Activated CD8-positive, alpha-beta T cell treated with anti-CD3 and anti-CD28 coated beads for 36 hours (primary cell): ENCODE measurements at regions of chr6 and their contacts with region 1.

Region 1: DNA sequence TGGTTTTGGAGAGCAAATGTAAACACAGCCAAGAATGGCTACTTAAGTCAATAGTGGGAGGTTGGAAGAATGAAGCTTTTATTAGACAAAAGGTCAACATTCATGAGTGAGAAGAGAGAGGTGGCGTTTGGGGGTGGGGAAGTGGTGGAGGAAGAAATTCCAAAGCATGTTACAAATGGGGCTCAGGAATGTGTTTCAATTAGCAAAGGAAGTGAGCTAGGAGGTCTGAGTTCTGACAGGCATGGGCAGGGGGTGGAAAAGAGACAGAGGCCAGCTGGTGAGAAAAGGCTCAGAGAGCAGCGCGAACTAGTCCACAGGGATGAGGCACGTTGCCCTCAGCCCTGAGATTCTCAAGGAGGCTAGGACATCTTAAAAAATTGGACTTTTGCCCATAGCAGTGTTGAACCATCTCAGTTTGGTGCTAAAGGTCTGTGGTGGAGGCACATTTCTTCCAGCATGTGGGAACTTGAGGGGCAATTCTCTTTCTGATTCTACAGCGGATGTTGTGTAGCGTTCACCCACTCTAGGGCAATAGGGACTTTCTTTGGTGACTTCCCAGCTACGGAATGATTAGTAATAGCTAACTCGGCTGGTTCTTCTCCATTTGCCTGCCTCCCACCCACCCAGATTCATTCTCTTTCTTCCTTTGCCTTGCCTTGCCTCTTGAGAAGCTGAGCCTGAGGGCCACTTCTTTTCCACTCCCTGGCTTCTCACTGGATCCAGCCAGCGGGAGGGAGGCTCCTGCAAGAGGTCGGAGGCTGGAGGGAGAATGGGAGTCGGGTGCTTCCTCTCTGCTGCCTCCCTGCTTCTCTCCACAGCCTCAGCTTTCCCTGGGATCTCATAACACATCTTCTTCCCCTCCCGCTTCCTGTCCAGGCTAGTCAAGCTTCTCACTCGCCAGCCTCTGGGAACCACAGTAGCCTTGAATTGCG is 45.1 kb upstream of the NEDD9 start:
- DNase-seq: peak; percentile 48
- ATAC-seq: peak; percentile 65
- H3K4me3 Mint-ChIP-seq: peak overlapping the region; percentile 39
- H3K27ac Mint-ChIP-seq: peak overlapping the region; percentile 88
- H3K4me1 Mint-ChIP-seq: peaks cover 45% of the 10 kb centered on the region
- H3K27me3 Mint-ChIP-seq: no peaks in the 10 kb centered on the region
- CTCF ChIP-seq: no peak

Region 2: DNA sequence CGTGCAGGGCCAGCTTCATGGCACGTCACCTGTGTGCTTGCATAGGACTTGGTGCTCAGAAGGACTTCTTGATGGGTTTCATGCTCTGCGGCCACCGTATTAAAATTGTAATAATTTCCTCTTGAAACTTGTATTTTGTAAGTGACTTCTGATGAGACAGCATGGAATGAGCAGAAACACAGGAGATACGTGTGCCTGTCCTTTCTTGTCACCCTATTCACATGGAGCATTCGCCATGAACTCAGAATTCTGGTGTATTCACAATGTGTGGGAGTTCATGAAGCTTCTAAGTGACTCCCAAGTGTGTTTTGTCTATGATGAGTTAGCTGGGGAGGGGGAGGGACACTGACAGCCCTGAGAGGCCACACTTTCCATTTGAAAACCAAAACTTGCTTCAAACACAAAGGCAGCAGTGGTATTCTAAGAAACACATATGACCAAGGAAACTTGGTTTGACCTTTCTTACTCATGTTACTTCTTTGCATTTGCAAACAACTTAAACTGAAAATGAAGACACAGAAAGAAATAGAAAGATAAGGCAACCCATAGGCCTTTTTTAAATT is 47.0 kb after region 1 on chr6:
- CTCF ChIA-PET with region 1: no interaction called
- POLR2A ChIA-PET with region 1: interaction called, 3 read pairs
- intact Hi-C with region 1: loop called (anchors 2 kb)
- DNase-seq: peak; percentile 87
- ATAC-seq: peak; percentile 92
- H3K4me3 Mint-ChIP-seq: peak overlapping the region; percentile 44
- H3K27ac Mint-ChIP-seq: peak overlapping the region; percentile 85
- H3K4me1 Mint-ChIP-seq: peaks cover 68% of the 10 kb centered on the region
- H3K27me3 Mint-ChIP-seq: no peaks in the 10 kb centered on the region
- CTCF ChIP-seq: no peak

Region 3: DNA sequence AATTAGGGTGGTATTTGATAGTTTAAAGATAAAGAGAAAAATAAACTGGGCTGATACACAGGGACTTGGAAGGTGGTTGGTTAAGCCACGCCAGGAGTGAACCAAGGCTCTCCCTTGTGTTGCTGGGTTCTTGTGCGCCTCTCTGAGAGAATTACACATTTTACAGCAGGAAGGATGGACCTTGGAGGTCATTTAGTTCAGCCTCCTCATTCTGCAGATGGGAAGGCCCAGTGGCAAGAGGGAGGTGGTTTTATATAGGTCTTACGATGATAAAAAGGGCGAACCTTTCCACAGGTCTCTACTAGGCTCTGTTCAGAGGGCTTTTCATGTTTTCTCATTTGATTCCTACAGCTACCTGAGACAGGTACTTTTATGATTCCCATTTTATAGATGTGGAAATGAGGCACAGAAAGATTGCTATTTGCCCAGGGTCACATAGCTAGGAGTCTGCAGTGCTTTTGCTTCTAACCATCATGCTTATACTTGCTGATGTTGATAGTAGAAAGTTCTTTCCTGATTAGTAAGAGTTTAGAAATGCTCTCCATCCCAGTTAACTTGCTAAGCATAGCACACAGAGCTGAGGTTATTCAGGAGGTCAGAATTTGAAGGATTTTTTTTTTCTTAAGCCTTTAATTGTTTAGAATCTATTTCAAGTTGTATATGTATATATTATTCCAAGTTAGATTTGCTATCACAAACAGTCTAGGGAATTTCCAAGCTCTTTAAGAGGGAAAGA is 747.3 kb after region 1 on chr6:
- CTCF ChIA-PET with region 1: no interaction called
- POLR2A ChIA-PET with region 1: no interaction called
- intact Hi-C with region 1: no loop called
- DNase-seq: no peak
- ATAC-seq: no peak
- H3K4me3 Mint-ChIP-seq: no peak overlapping the region
- H3K27ac Mint-ChIP-seq: no peak overlapping the region
- H3K4me1 Mint-ChIP-seq: peaks cover 55% of the 10 kb centered on the region
- H3K27me3 Mint-ChIP-seq: no peaks in the 10 kb centered on the region
- CTCF ChIP-seq: no peak